Activated T-helper 1 cell treated with anti-CD3 and anti-CD28 coated beads, Interleukin-12 subunit alpha, Interleukin-12 subunit beta, Interleukin-2, Interleukin-4 antibody, amounts not matched to agents 30 ng/mL and 10 ng/mL and 1 ng/mL, durations not matched to agents 14 hours and 24 hours and 36 hours (primary cell): ENCODE measurements at regions of chr1 and their contacts with region 1.

Region 1: DNA sequence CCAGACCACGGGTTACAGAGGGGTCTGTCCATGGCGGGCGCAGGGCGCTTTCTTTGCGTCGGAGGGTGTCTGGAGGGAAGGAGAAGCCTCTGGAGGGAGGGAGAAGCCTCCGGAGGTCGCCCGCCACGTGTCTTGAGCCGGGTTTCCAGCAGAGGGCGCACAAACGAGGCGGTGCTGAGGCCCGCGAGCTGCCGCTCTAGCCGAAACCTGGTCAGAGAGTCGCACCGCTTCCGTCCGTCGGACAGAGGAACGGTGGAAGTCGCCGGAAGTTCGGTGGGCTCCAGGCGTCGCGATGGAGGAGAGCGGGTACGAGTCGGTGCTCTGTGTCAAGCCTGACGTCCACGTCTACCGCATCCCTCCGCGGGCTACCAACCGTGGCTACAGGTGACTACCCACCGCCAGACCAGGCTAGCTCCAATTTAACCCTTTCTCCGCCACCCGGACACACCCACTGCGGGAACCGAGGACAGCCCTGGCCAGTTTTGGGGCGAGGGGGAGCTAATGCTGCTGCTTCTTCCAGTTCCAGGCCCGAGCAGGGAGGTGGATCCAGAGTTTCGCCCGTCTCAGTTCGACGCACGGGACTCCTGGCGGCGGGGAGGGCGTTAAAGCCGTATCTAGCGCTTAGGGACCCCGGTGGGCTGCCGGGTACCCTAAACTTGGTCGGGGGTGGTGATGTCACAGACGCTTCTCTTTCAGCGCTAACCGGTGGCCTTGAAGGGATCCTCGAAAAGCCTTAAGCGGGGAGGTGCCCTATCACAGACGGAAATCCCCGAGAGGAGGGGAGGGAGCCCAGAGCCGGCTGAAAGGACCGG is at the start of gene NECAP2:
- DNase-seq: peak; percentile 89
- H3K4me3 Mint-ChIP-seq: peak within 1 kb of the TSS; percentile 95
- H3K27ac Mint-ChIP-seq: peak within 1 kb of the TSS; percentile 93
- H3K4me1 Mint-ChIP-seq: peaks cover 33% of the 10 kb centered on the region
- H3K27me3 Mint-ChIP-seq: no peaks in the 10 kb centered on the region
- total RNA-seq, gene NECAP2: 79.9 and 81.9 TPM in 2 replicates

Region 2: GRCh38 chr1:16017461-16018303 is 423.0 kb before region 1 on chr1 and contains the start of gene HSPB7:
- intact Hi-C with region 1: no loop called
- DNase-seq: no peak
- H3K4me3 Mint-ChIP-seq: no peak within 1 kb of the TSS
- H3K27ac Mint-ChIP-seq: no peak within 1 kb of the TSS
- H3K4me1 Mint-ChIP-seq: peaks cover 14% of the 10 kb centered on the region
- H3K27me3 Mint-ChIP-seq: peaks cover 7% of the 10 kb centered on the region
- total RNA-seq, gene HSPB7: not detected in 2 replicates

Region 3: GRCh38 chr1:16236511-16237342 is 203.9 kb before region 1 on chr1 and contains the start of gene CPLANE2:
- intact Hi-C with region 1: loop called (anchors 2 kb)
- DNase-seq: peak; percentile 96
- H3K4me3 Mint-ChIP-seq: peak within 1 kb of the TSS; percentile 83
- H3K27ac Mint-ChIP-seq: peak within 1 kb of the TSS; percentile 87
- H3K4me1 Mint-ChIP-seq: peaks cover 26% of the 10 kb centered on the region
- H3K27me3 Mint-ChIP-seq: no peaks in the 10 kb centered on the region
- total RNA-seq, gene CPLANE2: 3.8 and 4.1 TPM in 2 replicates

Region 4: GRCh38 chr1:16351994-16352841 is 88.5 kb before region 1 on chr1 and contains the start of gene FBXO42:
- intact Hi-C with region 1: loop called (anchors 1 kb)
- DNase-seq: peak; percentile 94
- H3K4me3 Mint-ChIP-seq: peak within 1 kb of the TSS; percentile 97
- H3K27ac Mint-ChIP-seq: peak within 1 kb of the TSS; percentile 88
- H3K4me1 Mint-ChIP-seq: peaks cover 29% of the 10 kb centered on the region
- H3K27me3 Mint-ChIP-seq: no peaks in the 10 kb centered on the region
- total RNA-seq, gene FBXO42: 17.1 and 19.1 TPM in 2 replicates

Region 5: GRCh38 chr1:16459352-16459925 is 18.8 kb after region 1 on chr1:
- intact Hi-C with region 1: no loop called
- DNase-seq: no peak
- H3K4me3 Mint-ChIP-seq: no peak overlapping the region
- H3K27ac Mint-ChIP-seq: no peak overlapping the region
- H3K4me1 Mint-ChIP-seq: no peaks in the 10 kb centered on the region
- H3K27me3 Mint-ChIP-seq: no peaks in the 10 kb centered on the region

Region 6: DNA sequence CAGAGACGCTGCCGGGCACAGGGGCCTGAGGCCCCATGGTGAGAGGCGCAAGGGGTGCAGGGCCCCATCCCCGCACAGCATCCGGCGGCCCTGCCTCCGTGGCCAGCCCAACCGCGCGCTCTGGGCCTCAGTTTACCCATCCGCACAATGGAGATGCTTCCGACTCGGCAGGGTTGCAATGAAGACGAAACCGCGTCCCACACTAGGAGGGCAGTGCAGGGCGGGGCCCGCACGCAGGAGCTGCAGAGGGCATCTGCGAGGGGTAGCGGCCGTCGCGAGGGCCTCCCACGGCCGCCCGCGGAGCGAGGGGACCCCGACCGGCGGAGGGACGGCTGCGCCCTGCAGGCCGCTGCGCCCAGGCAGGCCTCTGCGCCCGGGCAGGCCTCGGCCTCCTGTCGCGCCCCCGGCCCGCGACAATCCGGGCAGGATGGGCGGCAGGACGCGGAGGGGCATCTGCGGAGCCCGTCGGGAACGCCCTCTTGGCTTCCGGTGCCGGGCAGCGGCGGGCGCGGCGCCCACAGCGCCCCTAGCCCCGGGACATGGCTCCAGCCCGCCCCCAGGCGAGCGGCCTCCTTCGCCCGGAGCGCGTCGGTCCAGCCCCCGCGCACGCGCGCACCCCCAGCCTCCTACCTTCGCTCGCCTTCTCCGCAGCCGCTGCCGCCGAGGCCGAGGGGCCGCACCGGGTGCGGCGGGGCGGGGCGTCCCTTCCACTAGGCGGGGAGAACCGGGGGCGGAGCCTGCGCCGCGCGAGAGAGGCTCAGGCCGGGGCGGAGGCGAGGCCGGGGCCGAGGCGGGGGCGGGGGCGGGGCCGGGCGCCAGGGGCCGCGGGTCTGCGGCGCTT is 58.1 kb after region 1 on chr1:
- intact Hi-C with region 1: loop called (anchors 1 kb)
- DNase-seq: peak; percentile 85
- H3K4me3 Mint-ChIP-seq: peak overlapping the region; percentile 83
- H3K27ac Mint-ChIP-seq: peak overlapping the region; percentile 67
- H3K4me1 Mint-ChIP-seq: peaks cover 8% of the 10 kb centered on the region
- H3K27me3 Mint-ChIP-seq: peaks cover 11% of the 10 kb centered on the region

Region 7: DNA sequence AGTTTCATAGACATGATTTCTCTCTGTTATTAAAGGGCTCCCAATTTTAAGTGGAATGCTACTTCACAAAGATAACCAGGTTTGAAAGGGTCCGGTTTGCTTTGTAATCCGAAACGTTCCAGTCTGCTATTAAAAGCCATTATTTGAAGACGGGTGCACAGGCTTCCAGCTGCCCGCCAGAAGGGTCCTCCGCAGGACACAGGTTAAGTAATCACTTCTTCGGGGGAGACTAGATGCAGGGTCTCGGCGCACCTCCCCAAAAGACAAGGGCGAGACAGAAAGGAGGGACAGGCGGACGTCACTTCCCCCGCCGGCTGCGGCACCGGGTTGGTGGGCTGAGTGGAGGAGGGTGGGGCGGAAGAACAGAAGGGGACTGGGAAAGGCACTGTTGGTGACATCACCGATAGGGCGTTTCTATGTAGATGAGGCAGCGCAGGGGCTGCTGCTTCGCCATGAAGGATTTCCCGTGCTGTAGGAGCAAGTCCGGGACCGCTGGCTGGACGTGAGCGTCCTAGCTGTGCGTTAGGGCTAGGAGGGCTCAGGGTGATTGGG is 464.0 kb after region 1 on chr1:
- intact Hi-C with region 1: loop called (anchors 5 kb)
- DNase-seq: peak; percentile 99
- H3K4me3 Mint-ChIP-seq: no peak overlapping the region
- H3K27ac Mint-ChIP-seq: no peak overlapping the region
- H3K4me1 Mint-ChIP-seq: peaks cover 19% of the 10 kb centered on the region
- H3K27me3 Mint-ChIP-seq: no peaks in the 10 kb centered on the region